GM12878 (cell line): ENCODE measurements at regions of chr2 and their contacts with region 1.

Region 1: GRCh38 chr2:182980115-182980514 is 58.1 kb downstream of the NCKAP1 start:
- DNase-seq: no peak
- ATAC-seq: peak; percentile 90
- H3K4me3 ChIP-seq: no peak overlapping the region
- H3K27ac ChIP-seq: no peak overlapping the region
- H3K4me1 ChIP-seq: no peaks in the 10 kb centered on the region
- H3K27me3 ChIP-seq: no peaks in the 10 kb centered on the region
- CTCF ChIP-seq: peak in 2 of 3 experiments; percentile 24 to 44; a peak in 3 of 6 replicates
- EP300 ChIP-seq: no peak
- POLR2A ChIP-seq: no peak
- RAD21 ChIP-seq: peak; percentile 65

Region 2: DNA sequence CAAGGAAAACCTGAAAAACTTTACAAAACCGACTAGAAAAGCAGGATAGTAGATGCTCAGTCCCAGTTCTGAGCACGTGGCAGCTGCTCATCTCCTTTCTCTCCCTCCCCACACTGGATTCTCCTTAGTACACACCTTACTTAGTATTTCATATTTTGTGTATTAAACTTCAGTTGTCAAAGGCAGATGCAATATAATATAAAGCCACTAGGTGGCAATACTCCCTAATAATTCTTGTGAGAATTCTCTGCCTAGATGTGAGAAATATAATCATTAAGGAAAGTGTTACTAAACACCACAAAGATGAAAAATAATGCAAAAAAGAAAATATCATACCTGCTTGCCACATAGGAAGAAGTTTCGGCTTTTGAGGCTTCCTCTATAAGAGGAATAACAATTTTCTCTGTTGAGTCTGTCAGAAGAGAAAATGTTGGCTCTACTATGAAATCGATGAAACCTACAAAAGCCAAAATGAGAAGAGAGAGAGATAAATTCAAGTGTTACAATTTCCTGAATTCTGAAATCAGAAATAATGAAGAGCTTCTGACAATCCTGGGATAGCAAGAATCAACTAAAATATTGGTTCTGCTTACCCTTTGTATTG is 793.9 kb before region 1 on chr2:
- CTCF ChIA-PET with region 1: interaction called, 6 read pairs
- POLR2A ChIA-PET with region 1: no interaction called
- RAD21 ChIA-PET with region 1: interaction called, 19 read pairs
- SMC1A ChIA-PET with region 1: interaction called, 15 read pairs
- in situ Hi-C with region 1: loop called (anchors 25 kb)
- intact Hi-C with region 1: loop called (anchors 1 kb)
- DNase-seq: no peak
- ATAC-seq: peak; percentile 75
- H3K4me3 ChIP-seq: no peak overlapping the region
- H3K27ac ChIP-seq: no peak overlapping the region
- H3K4me1 ChIP-seq: no peaks in the 10 kb centered on the region
- H3K27me3 ChIP-seq: no peaks in the 10 kb centered on the region
- CTCF ChIP-seq: peak; percentile 19 to 70 (median 51); a peak in 5 of 6 replicates
- EP300 ChIP-seq: no peak
- POLR2A ChIP-seq: no peak
- RAD21 ChIP-seq: peak; percentile 79

Region 3: DNA sequence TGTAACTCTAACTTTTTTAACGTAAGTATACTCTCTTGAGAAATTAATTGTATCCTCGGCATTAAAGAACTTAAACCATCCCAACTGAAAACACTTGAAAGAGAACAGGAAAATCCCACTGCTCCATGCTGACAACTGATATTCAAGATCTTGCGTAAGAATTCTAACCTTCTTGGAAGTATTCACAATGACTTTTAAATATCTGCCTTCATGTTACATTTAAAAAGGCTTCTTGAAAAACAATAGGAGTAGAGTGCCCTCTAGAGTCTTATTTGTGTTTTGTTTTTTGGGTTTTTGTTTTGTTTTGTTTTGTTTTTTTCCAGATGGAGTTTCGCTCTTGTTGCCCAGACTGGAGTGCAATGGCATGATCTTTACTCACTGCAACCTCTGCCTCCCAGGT is 329.4 kb before region 1 on chr2:
- CTCF ChIA-PET with region 1: interaction called, 16 read pairs
- POLR2A ChIA-PET with region 1: no interaction called
- RAD21 ChIA-PET with region 1: interaction called, 7 read pairs
- SMC1A ChIA-PET with region 1: interaction called, 7 read pairs
- in situ Hi-C with region 1: loop called (anchors 10 kb)
- intact Hi-C with region 1: no loop called
- DNase-seq: no peak
- ATAC-seq: peak; percentile 30
- H3K4me3 ChIP-seq: no peak overlapping the region
- H3K27ac ChIP-seq: no peak overlapping the region
- H3K4me1 ChIP-seq: no peaks in the 10 kb centered on the region
- H3K27me3 ChIP-seq: no peaks in the 10 kb centered on the region; a peak in 1 of 4 replicates
- CTCF ChIP-seq: peak; percentile 30 to 44 (median 43); a peak in 5 of 6 replicates
- EP300 ChIP-seq: no peak
- POLR2A ChIP-seq: no peak
- RAD21 ChIP-seq: peak; percentile 61

Region 4: GRCh38 chr2:182763311-182763912 is 216.7 kb before region 1 on chr2:
- CTCF ChIA-PET with region 1: interaction called, 28 read pairs
- POLR2A ChIA-PET with region 1: no interaction called
- RAD21 ChIA-PET with region 1: interaction called, 9 read pairs
- SMC1A ChIA-PET with region 1: interaction called, 11 read pairs
- in situ Hi-C with region 1: loop called (anchors 10 kb)
- intact Hi-C with region 1: loop called (anchors 2 kb)
- DNase-seq: no peak
- ATAC-seq: peak; percentile 69
- H3K4me3 ChIP-seq: no peak overlapping the region
- H3K27ac ChIP-seq: no peak overlapping the region
- H3K4me1 ChIP-seq: no peaks in the 10 kb centered on the region
- H3K27me3 ChIP-seq: no peaks in the 10 kb centered on the region
- CTCF ChIP-seq: peak; percentile 33 to 54 (median 42); a peak in 5 of 6 replicates
- EP300 ChIP-seq: no peak
- POLR2A ChIP-seq: no peak
- RAD21 ChIP-seq: peak; percentile 35

Region 5: DNA sequence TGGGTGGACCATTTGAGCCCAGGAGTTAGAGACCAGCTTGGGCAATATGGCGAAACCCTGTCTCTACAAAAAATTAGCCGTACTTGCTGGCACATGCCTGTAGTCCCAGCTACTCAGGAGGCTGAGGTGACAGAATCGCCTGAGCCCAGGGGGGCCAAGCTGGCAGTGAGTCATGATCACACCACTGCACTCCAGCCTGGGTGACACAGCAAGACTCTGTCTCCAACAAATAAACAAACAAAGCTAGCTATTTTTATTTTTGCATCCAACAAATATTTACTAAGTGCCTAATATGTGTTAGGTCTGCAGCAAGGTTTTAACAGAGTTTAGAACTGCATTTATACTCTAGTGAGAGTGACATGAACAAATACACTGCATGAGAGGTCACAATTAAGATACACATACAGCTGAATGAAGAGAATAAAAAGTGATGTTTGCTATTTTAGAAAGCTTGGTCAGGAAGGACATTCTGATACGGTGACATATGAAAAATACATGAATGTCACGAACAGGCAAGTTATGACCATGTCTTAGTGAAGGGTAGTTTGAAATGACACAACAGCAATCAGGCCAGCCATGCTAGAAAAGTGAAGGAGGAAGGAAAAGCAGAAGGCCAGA is 30.4 kb before region 1 on chr2:
- CTCF ChIA-PET with region 1: interaction called, 15 read pairs
- POLR2A ChIA-PET with region 1: no interaction called
- RAD21 ChIA-PET with region 1: no interaction called
- SMC1A ChIA-PET with region 1: interaction called, 3 read pairs
- in situ Hi-C with region 1: no loop called
- intact Hi-C with region 1: no loop called
- DNase-seq: no peak
- ATAC-seq: peak; percentile 55; the same call in 2 of the 3 replicates
- H3K4me3 ChIP-seq: no peak overlapping the region
- H3K27ac ChIP-seq: no peak overlapping the region
- H3K4me1 ChIP-seq: no peaks in the 10 kb centered on the region
- H3K27me3 ChIP-seq: no peaks in the 10 kb centered on the region
- CTCF ChIP-seq: no peak
- EP300 ChIP-seq: no peak
- POLR2A ChIP-seq: no peak
- RAD21 ChIP-seq: no peak

Region 6: DNA sequence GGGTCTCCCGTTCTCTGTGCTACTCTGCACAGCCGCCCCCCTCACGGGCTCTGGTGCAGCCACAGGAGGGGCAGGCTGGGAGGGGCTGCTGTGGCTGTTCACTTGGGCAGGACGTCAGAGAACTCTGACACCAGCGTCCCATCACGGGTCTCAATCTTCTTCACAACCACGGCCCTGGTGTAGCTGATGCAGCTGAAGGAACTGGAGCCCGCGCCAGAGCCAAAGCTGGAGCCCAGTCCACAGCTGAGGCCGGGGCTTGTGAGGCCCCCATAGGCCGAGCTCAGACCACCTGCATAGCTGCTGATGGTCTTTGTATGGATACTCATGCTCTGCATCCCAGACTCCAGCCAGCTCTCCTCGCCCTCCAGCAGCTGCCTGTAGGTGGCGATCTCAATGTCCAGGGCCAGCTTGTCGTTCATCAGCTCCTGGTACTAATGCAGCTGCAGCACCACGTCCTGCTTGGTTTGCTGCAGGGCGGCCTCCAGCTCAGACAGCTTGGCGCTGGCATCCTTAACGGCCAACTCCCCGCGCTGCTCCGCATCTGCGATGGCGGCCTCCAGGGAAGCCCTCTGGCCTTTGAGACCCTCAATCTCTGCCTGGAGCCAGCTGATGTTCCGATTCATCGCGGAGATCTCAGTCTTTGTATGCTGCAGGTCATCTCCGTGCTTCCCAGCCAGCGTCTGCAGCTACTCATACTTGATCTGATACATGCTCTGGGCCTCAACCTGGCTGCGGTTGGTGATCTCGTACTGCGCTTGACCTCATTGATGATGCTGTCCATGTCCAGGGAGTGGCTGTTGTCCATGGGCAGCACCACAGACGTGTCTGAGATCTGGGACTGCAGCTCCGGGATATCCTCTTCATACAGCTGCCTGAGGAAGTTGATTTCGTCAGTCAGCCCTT is 91.1 kb after region 1 on chr2:
- CTCF ChIA-PET with region 1: no interaction called
- POLR2A ChIA-PET with region 1: no interaction called
- RAD21 ChIA-PET with region 1: no interaction called
- SMC1A ChIA-PET with region 1: no interaction called
- in situ Hi-C with region 1: no loop called
- intact Hi-C with region 1: no loop called
- DNase-seq: no peak
- ATAC-seq: no peak
- H3K4me3 ChIP-seq: no peak overlapping the region
- H3K27ac ChIP-seq: no peak overlapping the region
- H3K4me1 ChIP-seq: no peaks in the 10 kb centered on the region
- H3K27me3 ChIP-seq: no peaks in the 10 kb centered on the region; a peak in 1 of 4 replicates
- CTCF ChIP-seq: peak in 2 of 3 experiments; percentile 10 to 35; a peak in 4 of 6 replicates
- EP300 ChIP-seq: no peak
- POLR2A ChIP-seq: no peak
- RAD21 ChIP-seq: peak; percentile 30; the same call in 1 of the 2 replicates

Region 7: DNA sequence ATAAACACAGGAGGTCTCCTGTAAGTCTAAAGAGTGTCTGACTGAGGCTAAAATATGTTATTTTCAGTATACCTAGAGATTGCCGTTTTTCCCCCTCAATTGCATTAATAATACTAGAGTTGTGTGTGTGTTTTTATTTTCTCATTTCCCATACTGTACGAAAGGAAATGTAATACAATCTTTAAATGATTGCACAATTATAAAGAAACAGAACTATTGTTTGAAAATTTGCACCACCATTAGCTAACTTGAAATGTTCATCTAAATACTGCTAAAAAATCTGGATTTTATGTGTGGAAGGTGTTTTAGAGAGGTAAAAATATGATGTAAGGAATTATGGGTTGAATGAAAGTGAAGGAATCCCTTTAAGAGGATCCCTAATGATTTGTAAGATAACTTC is 255.2 kb after region 1 on chr2:
- CTCF ChIA-PET with region 1: no interaction called
- POLR2A ChIA-PET with region 1: no interaction called
- RAD21 ChIA-PET with region 1: no interaction called
- SMC1A ChIA-PET with region 1: no interaction called
- in situ Hi-C with region 1: no loop called
- intact Hi-C with region 1: no loop called
- DNase-seq: no peak
- ATAC-seq: no peak
- H3K4me3 ChIP-seq: no peak overlapping the region
- H3K27ac ChIP-seq: no peak overlapping the region
- H3K4me1 ChIP-seq: no peaks in the 10 kb centered on the region
- H3K27me3 ChIP-seq: no peaks in the 10 kb centered on the region
- CTCF ChIP-seq: no peak
- EP300 ChIP-seq: no peak
- POLR2A ChIP-seq: no peak
- RAD21 ChIP-seq: no peak